ENCODE measurements at regions of chr10 and their contacts with region 1.

Region 1: DNA sequence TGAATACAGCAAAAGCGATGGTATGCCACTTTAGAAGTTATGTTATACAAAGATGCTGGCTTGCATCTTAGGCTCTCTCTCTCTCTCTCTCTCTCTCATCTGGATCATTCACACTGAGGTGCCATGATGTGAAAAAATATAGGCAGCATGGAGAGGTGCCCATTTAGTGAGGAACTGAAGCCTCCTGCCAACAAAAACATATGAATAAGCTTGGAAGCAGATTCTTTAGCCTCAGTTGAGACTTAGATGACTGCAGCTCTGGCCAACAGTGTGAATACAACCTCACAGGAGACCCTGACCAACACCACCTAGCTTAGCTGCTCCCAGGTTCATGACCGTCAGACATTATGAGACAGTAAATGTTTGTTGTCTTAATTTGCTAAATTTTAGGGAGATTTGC is 560.1 kb upstream of the LRRTM3 start:
- DNase-seq: no peak
- H3K4me3 ChIP-seq: no peak overlapping the region
- H3K27ac ChIP-seq: no peak overlapping the region
- H3K4me1 ChIP-seq: no peaks in the 10 kb centered on the region
- H3K27me3 ChIP-seq: no peaks in the 10 kb centered on the region
- CTCF ChIP-seq: no peak

Region 2: DNA sequence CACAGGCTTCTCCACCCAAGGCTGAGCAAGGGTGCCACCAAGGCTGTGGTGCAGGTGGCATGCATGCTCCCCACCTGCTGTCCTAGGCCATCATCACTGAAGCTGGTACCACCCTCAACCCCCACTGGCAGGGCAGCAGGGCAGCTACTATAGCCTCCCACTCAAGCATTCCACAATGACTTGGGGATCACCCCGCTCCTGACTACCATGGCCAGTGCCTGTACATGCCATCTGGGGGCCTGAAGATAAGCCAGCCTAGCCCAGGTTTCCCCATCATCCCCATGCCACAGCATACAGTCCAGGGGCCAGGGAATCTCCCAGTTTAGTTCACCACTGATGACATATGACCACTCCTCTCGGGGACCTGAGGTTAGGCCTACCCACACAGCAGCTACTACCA is 49.3 kb after region 1 on chr10:
- CTCF ChIA-PET with region 1: no interaction called
- dilution Hi-C with region 1: loop called (anchors 5 kb)
- in situ Hi-C with region 1: no loop called
- intact Hi-C with region 1: no loop called
- DNase-seq: no peak
- H3K4me3 ChIP-seq: no peak overlapping the region
- H3K27ac ChIP-seq: no peak overlapping the region
- H3K4me1 ChIP-seq: no peaks in the 10 kb centered on the region
- H3K27me3 ChIP-seq: no peaks in the 10 kb centered on the region
- CTCF ChIP-seq: no peak

Measured in mammary epithelial cell (primary cell).